ENCODE measurements at regions of chr20 and their contacts with region 1.

Region 1: GRCh38 chr20:63750807-63751470 is 11.4 kb downstream of the SLC2A4RG start:
- DNase-seq: peak; percentile 81
- ATAC-seq: peak; percentile 83
- H3K4me3 Mint-ChIP-seq: peak overlapping the region; percentile 62
- H3K27ac Mint-ChIP-seq: peak overlapping the region; percentile 93
- H3K4me1 Mint-ChIP-seq: peaks cover 18% of the 10 kb centered on the region
- H3K27me3 Mint-ChIP-seq: no peaks in the 10 kb centered on the region

Region 2: GRCh38 chr20:63594043-63594561 is 156.8 kb before region 1 on chr20:
- CTCF ChIA-PET with region 1: no interaction called
- DNase-seq: no peak
- ATAC-seq: no peak
- H3K4me3 Mint-ChIP-seq: no peak overlapping the region
- H3K27ac Mint-ChIP-seq: no peak overlapping the region
- H3K4me1 Mint-ChIP-seq: no peaks in the 10 kb centered on the region
- H3K27me3 Mint-ChIP-seq: no peaks in the 10 kb centered on the region

Region 3: DNA sequence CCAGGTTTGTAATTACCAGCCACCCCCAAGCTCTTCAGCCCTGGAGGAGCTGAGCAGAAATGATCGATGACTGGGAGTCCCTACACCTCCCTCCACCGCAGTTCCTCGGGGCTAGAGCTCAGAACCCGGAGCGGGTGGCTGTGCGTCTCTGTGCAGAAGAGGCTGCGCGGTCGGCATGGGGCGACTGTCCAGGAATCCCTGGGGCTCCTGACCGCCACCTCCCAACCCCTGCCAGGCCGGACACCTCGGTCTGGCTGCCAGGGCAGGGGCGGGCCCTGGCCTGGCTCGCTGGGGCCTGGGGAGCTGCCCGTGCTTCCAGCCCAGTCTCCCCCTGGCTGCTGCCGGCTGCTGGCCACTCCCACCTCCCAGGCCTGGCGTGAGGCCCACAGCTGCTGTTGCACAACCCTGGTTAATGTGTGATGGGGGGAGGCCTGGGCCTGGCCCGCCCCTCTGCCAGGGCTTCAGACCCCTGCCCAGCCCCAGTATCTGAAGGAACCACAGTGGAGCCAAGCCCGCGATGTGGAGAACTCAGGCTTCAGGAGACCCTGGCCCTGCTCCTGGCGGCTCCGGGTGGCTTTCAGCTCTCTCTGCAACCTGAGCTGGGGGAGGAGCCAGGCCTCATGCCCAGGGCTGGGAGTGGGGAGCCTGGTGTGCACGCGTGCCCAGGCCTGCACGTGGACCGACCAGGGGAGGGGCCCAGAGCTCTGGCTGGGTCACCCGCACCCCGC is 10.1 kb before region 1 on chr20:
- CTCF ChIA-PET with region 1: interaction called, 18 read pairs
- DNase-seq: peak; percentile 71
- ATAC-seq: peak; percentile 10
- H3K4me3 Mint-ChIP-seq: peak overlapping the region; percentile 61
- H3K27ac Mint-ChIP-seq: no peak overlapping the region
- H3K4me1 Mint-ChIP-seq: peaks cover 16% of the 10 kb centered on the region
- H3K27me3 Mint-ChIP-seq: no peaks in the 10 kb centered on the region